Left lung (tissue), 14 donors: ENCODE measurements at regions of chr7 and their contacts with region 1.

Region 1: DNA sequence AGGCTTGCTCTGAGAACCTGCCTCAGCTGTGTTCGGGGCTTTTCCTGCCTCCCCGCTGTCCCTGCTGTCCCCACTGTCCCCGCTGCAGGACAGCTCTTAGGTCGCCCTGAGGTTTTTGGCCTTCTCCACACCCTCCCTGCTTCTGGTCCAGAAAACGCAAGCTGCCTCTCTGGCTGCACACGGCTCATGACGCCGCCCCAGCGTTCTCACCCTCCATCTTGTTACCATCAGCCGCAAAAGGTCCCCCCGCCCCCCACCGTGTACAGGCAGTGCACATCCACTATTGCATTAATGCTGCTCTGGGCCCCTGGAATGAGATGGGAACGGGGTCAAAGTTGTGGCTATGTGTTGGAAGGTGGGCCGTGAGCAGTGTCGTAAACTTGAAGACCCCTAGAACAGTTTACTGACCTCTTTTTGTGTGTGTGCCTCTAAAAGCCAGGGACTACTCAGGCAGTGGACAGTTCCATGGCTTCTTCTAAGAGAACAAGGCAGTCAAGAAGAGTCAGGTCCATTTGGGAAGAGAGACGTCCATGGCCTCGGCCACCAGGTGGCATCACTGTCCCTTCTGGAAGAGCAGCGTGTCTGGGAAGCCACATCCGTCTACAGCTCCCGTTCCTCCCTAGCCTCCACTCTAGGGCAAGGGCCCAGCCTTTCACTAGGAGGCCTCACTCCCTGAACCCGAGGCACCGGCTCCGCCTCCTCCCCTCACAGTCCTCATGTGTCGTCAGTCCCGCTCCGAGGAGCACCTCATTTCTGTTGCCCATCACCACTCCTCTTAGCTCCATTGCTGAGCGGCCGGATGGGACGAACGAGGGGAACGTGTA is 38.5 kb upstream of the MKRN1 start:
- DNase-seq: peak; percentile 78 to 91 (median 88)
- ATAC-seq: peak; percentile 99
- H3K4me3 ChIP-seq: no peak overlapping the region
- H3K27ac ChIP-seq: peak overlapping the region in 1 of 2 donors; percentile 6
- H3K4me1 ChIP-seq: no peaks in the 10 kb centered on the region
- H3K27me3 ChIP-seq: no peaks in the 10 kb centered on the region
- CTCF ChIP-seq: peak; percentile 73 to 85

Region 2: GRCh38 chr7:140653319-140654108 is 135.8 kb after region 1 on chr7:
- intact Hi-C with region 1: loop called (anchors 2 to 10 kb)
- DNase-seq: peak in 3 of 4 donors; percentile 45 to 86 (median 72)
- ATAC-seq: peak; percentile 81
- H3K4me3 ChIP-seq: no peak overlapping the region
- H3K27ac ChIP-seq: no peak overlapping the region
- H3K4me1 ChIP-seq: peaks cover 0 to 24% of the 10 kb centered on the region in 2 donors
- H3K27me3 ChIP-seq: no peaks in the 10 kb centered on the region
- CTCF ChIP-seq: peak; percentile 77 to 93